GM12878 (cell line): ENCODE measurements at regions of chr2 and their contacts with region 1.

Region 1: DNA sequence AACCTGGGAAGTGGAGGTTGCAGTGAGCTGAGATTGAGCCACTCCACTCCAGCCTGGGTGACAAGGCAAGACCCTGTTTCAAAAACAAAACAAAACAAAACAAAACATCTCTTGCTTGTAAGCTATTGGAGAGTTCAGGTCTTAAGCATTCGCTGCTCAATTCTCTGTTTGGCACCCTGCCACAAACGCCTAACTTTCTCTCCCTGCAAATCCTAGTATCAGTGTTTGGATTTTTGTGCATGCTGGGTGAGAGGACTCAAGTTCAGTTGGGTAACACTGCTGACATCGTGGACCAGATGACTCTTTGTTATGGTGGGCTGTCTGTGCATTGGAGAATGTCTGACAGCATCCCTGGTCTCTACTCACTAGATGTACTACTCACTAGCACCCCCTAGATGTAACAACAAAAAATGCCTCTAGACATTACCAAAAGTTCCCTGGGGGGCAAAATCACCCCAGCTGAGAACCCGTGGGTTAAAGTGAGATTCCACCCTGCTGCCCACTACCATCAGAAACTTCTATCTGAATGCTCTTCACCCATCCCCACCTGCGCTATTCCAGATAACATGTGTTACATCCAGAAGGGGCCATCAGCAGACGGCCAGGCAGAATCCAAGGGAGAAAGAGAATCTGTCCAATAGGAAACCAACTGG is 50.9 kb downstream of the CACNB4 start:
- DNase-seq: no peak
- ATAC-seq: peak; percentile 55
- H3K4me3 ChIP-seq: no peak overlapping the region
- H3K27ac ChIP-seq: peak overlapping the region; percentile 96
- H3K4me1 ChIP-seq: peaks cover 64% of the 10 kb centered on the region
- H3K27me3 ChIP-seq: no peaks in the 10 kb centered on the region
- CTCF ChIP-seq: peak; percentile 15 to 57 (median 46); a peak in 3 of 6 replicates
- EP300 ChIP-seq: no peak
- POLR2A ChIP-seq: no peak
- RAD21 ChIP-seq: peak; percentile 31

Region 2: GRCh38 chr2:151840216-151841046 is 207.5 kb before region 1 on chr2:
- CTCF ChIA-PET with region 1: no interaction called
- POLR2A ChIA-PET with region 1: no interaction called
- RAD21 ChIA-PET with region 1: no interaction called
- SMC1A ChIA-PET with region 1: no interaction called
- in situ Hi-C with region 1: no loop called
- intact Hi-C with region 1: no loop called
- DNase-seq: peak; percentile 82
- ATAC-seq: peak; percentile 99
- H3K4me3 ChIP-seq: no peak overlapping the region
- H3K27ac ChIP-seq: peak overlapping the region; percentile 72
- H3K4me1 ChIP-seq: peaks cover 40% of the 10 kb centered on the region
- H3K27me3 ChIP-seq: no peaks in the 10 kb centered on the region
- CTCF ChIP-seq: no peak
- EP300 ChIP-seq: peak in 1 of 2 experiments; percentile 91; a peak in 3 of 4 replicates
- POLR2A ChIP-seq: no peak
- RAD21 ChIP-seq: no peak

Region 3: GRCh38 chr2:152036611-152037469 is 11.1 kb before region 1 on chr2:
- CTCF ChIA-PET with region 1: interaction called, 50 read pairs
- POLR2A ChIA-PET with region 1: no interaction called
- RAD21 ChIA-PET with region 1: interaction called, 25 read pairs
- SMC1A ChIA-PET with region 1: interaction called, 26 read pairs
- in situ Hi-C with region 1: no loop called
- intact Hi-C with region 1: no loop called
- DNase-seq: no peak
- ATAC-seq: peak; percentile 97
- H3K4me3 ChIP-seq: no peak overlapping the region
- H3K27ac ChIP-seq: no peak overlapping the region
- H3K4me1 ChIP-seq: no peaks in the 10 kb centered on the region
- H3K27me3 ChIP-seq: no peaks in the 10 kb centered on the region
- CTCF ChIP-seq: peak; percentile 78 to 89 (median 80)
- EP300 ChIP-seq: no peak
- POLR2A ChIP-seq: no peak
- RAD21 ChIP-seq: peak; percentile 99

Region 4: DNA sequence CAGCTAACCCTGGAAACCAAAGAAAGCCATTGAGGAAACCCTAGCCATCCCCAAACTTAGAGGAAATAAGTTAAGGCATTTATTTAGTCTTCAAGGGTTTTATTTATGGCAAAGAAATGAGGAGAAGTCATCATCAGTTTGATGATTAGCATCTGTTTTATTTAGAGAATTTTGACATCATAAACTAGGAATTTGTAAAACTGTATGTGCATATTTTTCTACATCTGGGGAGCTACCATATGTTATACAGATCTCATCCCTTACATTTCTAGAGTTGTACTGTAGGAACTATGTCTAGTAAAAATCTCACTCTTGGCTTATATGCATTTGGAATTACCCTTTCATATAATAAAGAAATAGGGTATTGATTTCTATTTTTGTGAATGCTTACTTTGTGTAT is 335.8 kb after region 1 on chr2:
- CTCF ChIA-PET with region 1: no interaction called
- POLR2A ChIA-PET with region 1: no interaction called
- RAD21 ChIA-PET with region 1: no interaction called
- SMC1A ChIA-PET with region 1: no interaction called
- in situ Hi-C with region 1: no loop called
- intact Hi-C with region 1: no loop called
- DNase-seq: no peak
- ATAC-seq: no peak
- H3K4me3 ChIP-seq: no peak overlapping the region
- H3K27ac ChIP-seq: no peak overlapping the region
- H3K4me1 ChIP-seq: no peaks in the 10 kb centered on the region
- H3K27me3 ChIP-seq: no peaks in the 10 kb centered on the region
- CTCF ChIP-seq: no peak
- EP300 ChIP-seq: no peak
- POLR2A ChIP-seq: no peak
- RAD21 ChIP-seq: no peak

Region 5: GRCh38 chr2:152542995-152543481 is 495.1 kb after region 1 on chr2:
- CTCF ChIA-PET with region 1: no interaction called
- POLR2A ChIA-PET with region 1: no interaction called
- RAD21 ChIA-PET with region 1: no interaction called
- SMC1A ChIA-PET with region 1: no interaction called
- in situ Hi-C with region 1: no loop called
- intact Hi-C with region 1: no loop called
- DNase-seq: no peak
- ATAC-seq: no peak
- H3K4me3 ChIP-seq: no peak overlapping the region
- H3K27ac ChIP-seq: no peak overlapping the region
- H3K4me1 ChIP-seq: no peaks in the 10 kb centered on the region
- H3K27me3 ChIP-seq: no peaks in the 10 kb centered on the region
- CTCF ChIP-seq: no peak
- EP300 ChIP-seq: no peak
- POLR2A ChIP-seq: no peak
- RAD21 ChIP-seq: no peak

Region 6: GRCh38 chr2:152566728-152567069 is 518.8 kb after region 1 on chr2:
- CTCF ChIA-PET with region 1: interaction called, 5 read pairs
- POLR2A ChIA-PET with region 1: no interaction called
- RAD21 ChIA-PET with region 1: no interaction called
- SMC1A ChIA-PET with region 1: no interaction called
- in situ Hi-C with region 1: no loop called
- intact Hi-C with region 1: loop called (anchors 10 kb)
- DNase-seq: peak; percentile 64
- ATAC-seq: peak; percentile 54
- H3K4me3 ChIP-seq: no peak overlapping the region
- H3K27ac ChIP-seq: peak overlapping the region; percentile 65
- H3K4me1 ChIP-seq: peaks cover 28% of the 10 kb centered on the region
- H3K27me3 ChIP-seq: no peaks in the 10 kb centered on the region
- CTCF ChIP-seq: no peak
- EP300 ChIP-seq: 0 out of 4 replicates have a peak, but pooled peaks of 1 of the 2 experiments have one; percentile 45
- POLR2A ChIP-seq: no peak
- RAD21 ChIP-seq: no peak